ENCODE measurements at regions of chr5 and their contacts with region 1.

Region 1: GRCh38 chr5:94613583-94613982 is 4.8 kb downstream of the KIAA0825 start:
- DNase-seq: peak; percentile 17
- H3K4me3 ChIP-seq: no peak overlapping the region
- H3K27ac ChIP-seq: no peak overlapping the region
- H3K4me1 ChIP-seq: peaks cover 9% of the 10 kb centered on the region
- H3K27me3 ChIP-seq: no peaks in the 10 kb centered on the region
- CTCF ChIP-seq: peak; percentile 21

Region 2: GRCh38 chr5:94784536-94785510 is 171.2 kb after region 1 on chr5:
- CTCF ChIA-PET with region 1: no interaction called
- dilution Hi-C with region 1: no loop called
- in situ Hi-C with region 1: no loop called
- intact Hi-C with region 1: loop called (anchors 5 kb)
- DNase-seq: no peak
- H3K4me3 ChIP-seq: no peak overlapping the region
- H3K27ac ChIP-seq: no peak overlapping the region
- H3K4me1 ChIP-seq: no peaks in the 10 kb centered on the region
- H3K27me3 ChIP-seq: no peaks in the 10 kb centered on the region
- CTCF ChIP-seq: peak in 1 of 2 donors; percentile 25